Posterior vena cava (tissue), 2 donors: ENCODE measurements at regions of chr7 and their contacts with region 1.

Region 1: GRCh38 chr7:40604601-40605438 is 470.0 kb downstream of the SUGCT start:
- DNase-seq: peak; percentile 85

Region 2: DNA sequence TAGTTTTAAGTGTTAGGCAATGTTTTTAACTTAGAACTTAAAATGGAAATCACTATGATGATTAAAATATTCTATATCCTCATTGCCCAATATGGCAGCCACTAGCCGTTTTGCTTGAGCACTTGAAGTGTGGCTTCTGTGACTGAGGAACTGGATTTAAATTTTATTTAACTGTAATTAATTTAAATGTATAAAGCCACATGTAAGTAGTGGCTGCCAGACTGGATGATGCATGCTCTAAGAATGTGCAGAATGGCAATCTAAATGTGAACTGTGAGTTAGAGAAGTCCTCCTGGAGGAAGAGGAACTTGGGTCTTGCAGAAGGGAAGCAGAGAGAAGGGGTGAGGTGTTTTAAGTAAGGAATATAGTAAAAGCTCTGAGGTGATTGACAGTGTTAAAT is 18.6 kb before region 1 on chr7:
- intact Hi-C with region 1: loop called in 1 of 2 experiments (anchors 2 kb)
- DNase-seq: no peak